Heart right ventricle (tissue), 16 donors: ENCODE measurements at regions of chr15 and their contacts with region 1.

Region 1: GRCh38 chr15:44325568-44325967 is 37.0 kb downstream of the GOLM2 start:
- DNase-seq: no peak
- ATAC-seq: no peak
- H3K4me3 ChIP-seq: no peak overlapping the region
- H3K27ac ChIP-seq: no peak overlapping the region
- H3K4me1 ChIP-seq: peaks cover 0 to 8% (median 0%) of the 10 kb centered on the region in 9 donors
- H3K27me3 ChIP-seq: no peaks in the 10 kb centered on the region
- CTCF ChIP-seq: no peak

Region 2: DNA sequence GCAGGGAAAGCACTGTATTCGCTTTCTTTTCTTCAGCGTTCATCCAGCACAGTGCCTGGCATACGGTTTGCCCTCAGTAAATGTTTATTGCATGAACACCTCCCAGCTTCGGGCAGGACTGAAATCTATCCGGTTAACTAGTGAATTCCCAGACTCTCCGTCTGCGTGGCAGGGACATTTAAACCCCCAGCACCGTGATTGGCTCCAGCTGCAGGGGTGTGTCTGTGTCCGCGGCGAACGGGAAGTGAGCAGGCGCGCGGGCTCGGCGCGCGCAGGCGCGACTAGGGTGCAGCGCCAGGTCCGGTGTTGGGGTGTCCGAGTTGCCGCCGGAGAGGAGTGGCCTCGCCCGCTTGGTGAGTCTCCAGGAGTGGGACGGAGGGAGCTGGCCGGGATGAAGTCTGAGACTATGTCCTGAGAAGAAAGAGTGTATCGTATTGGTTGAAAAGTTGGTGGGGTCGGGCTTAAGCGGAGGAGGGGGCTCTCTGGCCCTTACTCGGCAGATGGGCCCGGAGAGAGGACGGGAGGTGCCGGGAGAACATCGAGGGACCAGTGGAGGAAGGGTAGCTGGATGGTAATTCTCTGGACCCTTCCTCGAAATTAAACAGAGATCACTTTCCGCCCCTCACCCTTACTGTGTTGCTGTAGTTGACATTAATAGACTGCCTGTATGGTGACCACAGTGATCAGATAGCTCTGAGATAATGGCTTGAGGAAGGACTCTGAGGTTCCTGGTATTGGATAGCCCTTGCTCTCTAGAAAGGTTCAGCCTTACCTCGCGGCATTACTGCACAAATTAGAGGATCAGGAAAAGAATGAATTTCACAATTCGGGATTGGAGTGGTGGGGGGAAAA is 1830.0 kb before region 1 on chr15 and contains the start of gene SNAP23:
- intact Hi-C with region 1: no loop called
- DNase-seq: peak; percentile 93
- ATAC-seq: peak; percentile 95 to 97 (median 96)
- H3K4me3 ChIP-seq: peak within 1 kb of the TSS; percentile 34 to 95 (median 68)
- H3K27ac ChIP-seq: peak within 1 kb of the TSS; percentile 83 to 93 (median 90)
- H3K4me1 ChIP-seq: peaks cover 8 to 81% (median 58%) of the 10 kb centered on the region in 9 donors
- H3K27me3 ChIP-seq: no peaks in the 10 kb centered on the region
- CTCF ChIP-seq: no peak
- total RNA-seq, gene SNAP23: 26.7 to 64.8 (median 46.6) TPM

Region 3: GRCh38 chr15:44222478-44222877 is 103.1 kb before region 1 on chr15:
- intact Hi-C with region 1: no loop called
- DNase-seq: no peak
- ATAC-seq: no peak
- H3K4me3 ChIP-seq: no peak overlapping the region
- H3K27ac ChIP-seq: no peak overlapping the region
- H3K4me1 ChIP-seq: no peaks in the 10 kb centered on the region
- H3K27me3 ChIP-seq: peaks cover 0 to 6% (median 0%) of the 10 kb centered on the region in 7 donors
- CTCF ChIP-seq: no peak

Region 4: GRCh38 chr15:44265757-44266156 is 59.8 kb before region 1 on chr15:
- intact Hi-C with region 1: loop called in 1 of 10 experiments (anchors 10 kb)
- DNase-seq: no peak
- ATAC-seq: no peak
- H3K4me3 ChIP-seq: no peak overlapping the region
- H3K27ac ChIP-seq: no peak overlapping the region
- H3K4me1 ChIP-seq: no peaks in the 10 kb centered on the region
- H3K27me3 ChIP-seq: no peaks in the 10 kb centered on the region
- CTCF ChIP-seq: no peak

Region 5: GRCh38 chr15:44775953-44776352 is 450.4 kb after region 1 on chr15:
- intact Hi-C with region 1: no loop called
- DNase-seq: no peak
- ATAC-seq: no peak
- H3K4me3 ChIP-seq: no peak overlapping the region
- H3K27ac ChIP-seq: no peak overlapping the region
- H3K4me1 ChIP-seq: no peaks in the 10 kb centered on the region
- H3K27me3 ChIP-seq: no peaks in the 10 kb centered on the region
- CTCF ChIP-seq: no peak